Sigmoid colon (tissue), 7 donors: ENCODE measurements at regions of chr12 and their contacts with region 1.

Region 1: GRCh38 chr12:97446895-97447294 is 15.7 kb upstream of the RMST start:
- DNase-seq: no peak
- H3K4me3 ChIP-seq: no peak overlapping the region
- H3K27ac ChIP-seq: no peak overlapping the region
- H3K4me1 ChIP-seq: no peaks in the 10 kb centered on the region
- H3K27me3 ChIP-seq: no peaks in the 10 kb centered on the region
- CTCF ChIP-seq: no peak
- EP300 ChIP-seq: no peak
- POLR2A ChIP-seq: no peak

Region 2: GRCh38 chr12:97426492-97427116 is 20.3 kb before region 1 on chr12:
- intact Hi-C with region 1: loop called (anchors 1 kb)
- DNase-seq: no peak
- H3K4me3 ChIP-seq: no peak overlapping the region
- H3K27ac ChIP-seq: no peak overlapping the region
- H3K4me1 ChIP-seq: no peaks in the 10 kb centered on the region
- H3K27me3 ChIP-seq: no peaks in the 10 kb centered on the region
- CTCF ChIP-seq: no peak
- EP300 ChIP-seq: no peak
- POLR2A ChIP-seq: no peak